GM10248 (cell line): ENCODE measurements at regions of chr10 and their contacts with region 1.

Region 1: DNA sequence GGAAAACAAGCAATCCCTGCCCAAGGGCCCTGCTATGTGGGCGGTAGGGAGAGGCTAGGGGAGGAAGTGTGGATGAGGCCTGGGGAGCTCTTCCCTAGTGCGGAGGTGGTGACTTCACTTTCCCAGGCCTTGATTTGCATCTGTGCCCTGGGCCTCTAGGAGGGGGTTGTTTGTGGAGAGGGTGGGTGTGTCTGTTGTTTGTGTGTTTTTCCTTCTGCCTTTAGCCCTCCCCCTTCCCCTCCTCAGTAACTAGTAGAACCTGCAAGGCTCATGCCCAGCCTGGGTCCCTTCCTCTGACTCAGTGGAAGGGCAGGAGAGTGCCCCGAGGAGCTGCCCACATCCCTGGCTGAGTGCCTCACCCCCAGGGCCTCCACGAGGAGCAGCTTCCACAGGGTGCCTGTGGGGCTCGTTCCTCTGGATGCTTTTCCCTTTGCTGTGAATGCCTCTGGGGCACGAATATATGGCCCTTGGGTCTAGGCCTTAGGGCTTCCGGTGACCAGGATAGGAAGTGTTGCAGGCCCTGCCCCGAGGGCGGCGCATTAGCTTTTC is 89.4 kb upstream of the DUSP5 start:
- DNase-seq: no peak
- CTCF ChIP-seq: no peak

Region 2: DNA sequence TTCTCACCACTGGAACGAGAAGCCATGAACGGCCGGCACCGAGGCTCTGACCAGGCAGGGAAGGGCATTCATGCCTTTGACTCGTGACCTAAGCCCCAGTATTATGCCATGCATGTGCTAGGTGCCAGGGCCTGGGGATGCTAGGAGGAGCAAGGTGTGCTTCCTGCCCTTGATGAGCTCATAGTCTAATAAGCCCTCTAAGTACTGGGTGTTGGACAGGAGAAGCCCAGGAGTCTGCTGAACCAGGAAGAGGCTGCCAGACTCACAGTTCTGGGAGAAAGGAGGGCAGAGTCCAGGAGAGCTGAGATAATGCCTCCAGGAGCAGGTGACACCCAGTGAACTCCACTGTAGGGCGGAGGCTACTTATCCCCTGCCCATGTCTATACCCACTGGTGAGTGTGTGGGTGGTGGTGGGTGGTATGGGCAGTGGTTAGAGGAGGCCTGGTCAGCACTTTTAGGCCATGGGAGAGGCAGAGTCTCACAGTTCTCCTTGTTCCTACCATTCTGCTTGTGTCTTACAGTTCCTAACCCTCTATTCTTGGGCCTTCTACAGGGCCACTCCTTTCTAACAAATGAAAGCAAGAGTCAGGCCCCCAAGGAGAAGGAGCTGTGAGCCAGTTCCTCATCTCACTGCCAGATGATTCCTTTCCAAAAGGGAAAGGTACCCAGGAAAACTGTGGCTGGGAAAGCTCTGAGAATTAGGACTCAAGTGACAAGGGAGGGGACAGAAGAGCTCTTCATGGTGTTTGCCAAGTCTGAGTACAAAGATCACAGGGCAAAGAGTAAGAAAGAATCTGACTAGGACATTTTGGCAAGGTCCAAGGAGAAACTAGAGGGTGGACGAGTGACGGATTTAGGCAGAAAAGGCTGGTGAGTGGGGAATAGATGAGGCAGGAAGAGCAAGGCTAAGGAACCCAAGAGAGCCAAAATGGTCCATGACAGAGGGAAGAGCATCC is 204.5 kb before region 1 on chr10:
- CTCF ChIA-PET with region 1: no interaction called
- POLR2A ChIA-PET with region 1: no interaction called
- DNase-seq: no peak
- CTCF ChIP-seq: no peak

Region 3: GRCh38 chr10:110368002-110368401 is 40.3 kb before region 1 on chr10:
- CTCF ChIA-PET with region 1: interaction called, 17 read pairs
- POLR2A ChIA-PET with region 1: no interaction called
- DNase-seq: peak; percentile 56
- CTCF ChIP-seq: no peak

Region 4: GRCh38 chr10:110395725-110396651 is 12.3 kb before region 1 on chr10:
- CTCF ChIA-PET with region 1: interaction called, 33 read pairs
- POLR2A ChIA-PET with region 1: interaction called, 3 read pairs
- DNase-seq: peak; percentile 79
- CTCF ChIP-seq: no peak

Region 5: GRCh38 chr10:111872591-111872990 is 1464.3 kb after region 1 on chr10:
- CTCF ChIA-PET with region 1: no interaction called
- POLR2A ChIA-PET with region 1: no interaction called
- DNase-seq: no peak
- CTCF ChIP-seq: no peak